ENCODE measurements at regions of chr3 and their contacts with region 1.

Region 1: DNA sequence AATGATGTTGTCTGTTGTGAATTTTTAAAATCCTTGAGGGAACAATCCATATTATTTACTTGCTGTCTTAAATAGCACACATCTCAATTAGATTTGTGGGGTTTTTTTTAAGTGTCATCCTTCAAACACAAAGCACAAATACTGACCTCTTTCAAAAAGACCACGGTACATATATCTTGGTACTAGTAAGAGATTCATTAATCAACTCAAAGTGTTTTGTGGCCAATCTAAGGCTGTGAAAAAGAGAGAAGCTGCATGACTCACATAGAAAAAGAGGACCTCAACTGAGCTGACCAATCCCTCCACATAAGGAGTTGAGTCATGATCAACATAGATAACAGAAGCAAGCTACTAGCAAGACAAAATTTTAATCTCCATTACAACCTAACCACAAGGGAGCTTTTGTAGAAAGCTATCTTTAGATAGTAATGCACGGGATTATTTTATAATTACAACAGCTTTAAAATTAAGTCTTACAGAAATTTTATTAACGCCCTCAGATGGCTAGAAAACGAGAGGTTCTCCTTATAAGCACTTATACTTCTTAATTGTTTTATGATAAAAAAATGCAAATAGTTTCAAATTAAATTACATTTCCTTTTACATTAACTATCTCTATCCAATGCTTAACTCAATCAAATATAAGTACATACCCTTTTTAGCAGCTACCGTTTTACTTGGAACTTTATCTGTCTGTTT is 60.5 kb downstream of the TOP2B start:
- DNase-seq: no peak
- ATAC-seq: peak; percentile 93
- H3K4me3 Mint-ChIP-seq: no peak overlapping the region
- H3K27ac Mint-ChIP-seq: peak overlapping the region; percentile 66
- H3K4me1 Mint-ChIP-seq: peaks cover 12% of the 10 kb centered on the region
- H3K27me3 Mint-ChIP-seq: no peaks in the 10 kb centered on the region
- CTCF ChIP-seq: no peak

Region 2: DNA sequence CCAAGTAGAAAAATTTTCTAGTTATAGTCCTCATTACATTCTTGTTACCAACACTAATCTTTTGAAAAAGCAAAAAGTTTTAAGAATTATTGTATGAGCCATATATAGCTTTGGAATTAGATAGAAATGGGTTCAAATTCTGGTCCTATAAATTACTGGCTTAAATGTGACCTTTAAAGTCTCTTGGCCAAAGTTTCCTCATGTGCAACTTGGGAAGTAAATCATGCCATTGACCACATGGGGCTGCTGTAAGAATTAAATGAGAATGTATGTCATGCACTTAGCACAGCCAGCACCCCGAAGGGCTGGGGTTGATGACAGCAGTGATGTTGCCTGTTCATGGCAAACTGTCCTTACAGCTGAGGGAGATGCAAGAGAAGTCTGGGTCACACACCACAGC is 47.8 kb before region 1 on chr3:
- CTCF ChIA-PET with region 1: no interaction called
- POLR2A ChIA-PET with region 1: no interaction called
- intact Hi-C with region 1: no loop called
- DNase-seq: no peak
- ATAC-seq: no peak
- H3K4me3 Mint-ChIP-seq: no peak overlapping the region
- H3K27ac Mint-ChIP-seq: no peak overlapping the region
- H3K4me1 Mint-ChIP-seq: no peaks in the 10 kb centered on the region
- H3K27me3 Mint-ChIP-seq: no peaks in the 10 kb centered on the region
- CTCF ChIP-seq: no peak

Region 3: DNA sequence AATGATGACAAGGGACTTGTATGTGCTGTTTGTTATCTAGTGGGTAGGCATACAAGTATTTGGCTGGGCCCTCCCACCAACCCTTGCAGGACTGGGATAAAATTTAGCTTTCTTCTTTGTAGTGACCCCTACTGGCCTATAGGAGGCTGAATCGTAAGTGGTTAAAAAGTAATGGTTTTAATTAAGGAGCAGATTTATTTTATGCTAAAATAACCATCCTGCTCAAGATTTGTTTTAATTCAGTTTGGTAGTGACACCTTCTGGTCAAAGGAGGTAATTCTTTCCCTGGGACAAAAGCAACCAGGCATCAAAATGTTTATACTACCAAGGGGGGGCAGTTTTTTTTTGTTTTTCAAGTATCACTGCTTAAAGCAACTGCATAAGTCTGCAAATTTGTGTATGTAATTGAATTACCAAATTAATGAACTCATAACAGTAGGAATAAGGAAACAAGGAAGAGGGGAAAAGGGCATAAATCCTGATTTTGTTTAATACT is 10.2 kb before region 1 on chr3:
- CTCF ChIA-PET with region 1: interaction called, 23 read pairs
- POLR2A ChIA-PET with region 1: no interaction called
- intact Hi-C with region 1: no loop called
- DNase-seq: peak; percentile 20
- ATAC-seq: peak; percentile 75
- H3K4me3 Mint-ChIP-seq: no peak overlapping the region
- H3K27ac Mint-ChIP-seq: no peak overlapping the region
- H3K4me1 Mint-ChIP-seq: peaks cover 4% of the 10 kb centered on the region
- H3K27me3 Mint-ChIP-seq: no peaks in the 10 kb centered on the region
- CTCF ChIP-seq: peak; percentile 81